BJ (cell line): ENCODE measurements at regions of chr2 and their contacts with region 1.

Region 1: GRCh38 chr2:120858361-120859106 is 122.9 kb downstream of the GLI2 start:
- DNase-seq: no peak
- H3K4me3 ChIP-seq: no peak overlapping the region
- H3K27me3 ChIP-seq: no peaks in the 10 kb centered on the region
- CTCF ChIP-seq: no peak

Region 2: DNA sequence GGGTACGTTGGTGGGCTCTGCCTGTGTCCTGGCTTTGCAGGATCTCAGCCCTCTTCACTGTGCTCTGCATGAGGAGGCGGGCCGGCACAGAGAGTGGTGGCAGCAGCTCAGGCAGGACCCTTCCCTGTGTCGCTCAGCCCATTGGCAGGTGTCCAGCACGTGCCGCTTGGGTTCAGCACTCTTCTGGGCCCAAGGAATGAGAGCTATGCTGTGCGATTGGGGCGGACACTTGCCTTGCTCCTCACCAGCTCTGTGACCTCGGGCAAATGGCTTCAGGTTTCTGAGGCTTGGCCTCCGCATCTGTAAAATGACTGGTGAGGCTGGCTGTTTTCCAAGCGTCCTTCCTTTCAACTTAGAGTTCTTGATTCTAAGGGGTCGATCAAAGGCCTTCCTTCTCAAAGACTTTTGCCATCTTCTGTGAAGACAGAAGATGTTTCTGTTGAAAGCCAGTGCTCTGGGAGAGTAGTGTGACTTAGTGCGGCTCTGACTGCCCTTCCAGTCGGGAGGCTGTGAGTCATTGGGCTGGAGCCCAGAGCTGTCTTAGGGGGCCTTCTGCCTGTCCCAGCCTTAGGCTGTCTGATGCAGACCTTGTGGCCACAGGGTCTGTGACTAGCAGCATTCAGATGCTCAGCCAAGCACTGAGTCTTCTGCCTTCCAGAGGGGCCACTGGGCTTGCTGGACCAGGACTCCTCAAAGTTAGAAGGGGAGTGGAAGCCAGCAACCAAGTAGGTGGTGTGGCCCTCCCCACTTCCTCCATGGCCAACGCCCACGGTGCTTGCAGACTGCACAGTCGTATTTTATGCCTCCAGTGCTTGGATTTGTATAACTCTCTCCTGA is 87.2 kb before region 1 on chr2:
- CTCF ChIA-PET with region 1: no interaction called
- POLR2A ChIA-PET with region 1: no interaction called
- DNase-seq: peak; percentile 75
- H3K4me3 ChIP-seq: no peak overlapping the region
- H3K27me3 ChIP-seq: no peaks in the 10 kb centered on the region
- CTCF ChIP-seq: no peak

Region 3: DNA sequence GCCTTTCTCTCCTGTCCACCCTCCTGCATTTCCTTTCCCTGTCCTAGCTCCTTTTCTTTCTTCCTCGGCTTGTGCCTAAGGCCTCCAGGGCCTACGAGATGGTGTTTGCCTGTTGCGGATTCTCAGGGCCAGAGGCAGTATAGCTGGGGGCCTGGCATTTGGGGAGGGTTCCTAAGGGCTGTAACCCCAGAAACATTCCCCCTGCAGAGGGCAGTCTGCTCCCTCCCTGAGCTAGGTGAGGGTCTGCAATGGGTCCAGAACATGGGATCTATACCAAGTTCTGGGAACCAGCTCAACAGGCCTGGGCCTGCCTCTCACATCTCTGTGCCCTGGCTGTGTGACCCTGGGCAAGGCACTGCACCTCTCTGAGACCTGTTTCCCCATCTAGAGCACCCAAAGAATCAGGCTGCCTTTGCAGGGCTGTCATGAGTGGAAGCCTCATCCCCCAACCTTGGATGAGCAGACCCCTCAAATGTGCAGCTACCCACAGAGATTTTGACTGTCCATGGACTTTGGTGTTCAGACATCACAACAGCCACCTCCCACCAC is 25.3 kb before region 1 on chr2:
- CTCF ChIA-PET with region 1: no interaction called
- POLR2A ChIA-PET with region 1: interaction called, 18 read pairs
- DNase-seq: no peak
- H3K4me3 ChIP-seq: no peak overlapping the region
- H3K27me3 ChIP-seq: no peaks in the 10 kb centered on the region
- CTCF ChIP-seq: no peak

Region 4: DNA sequence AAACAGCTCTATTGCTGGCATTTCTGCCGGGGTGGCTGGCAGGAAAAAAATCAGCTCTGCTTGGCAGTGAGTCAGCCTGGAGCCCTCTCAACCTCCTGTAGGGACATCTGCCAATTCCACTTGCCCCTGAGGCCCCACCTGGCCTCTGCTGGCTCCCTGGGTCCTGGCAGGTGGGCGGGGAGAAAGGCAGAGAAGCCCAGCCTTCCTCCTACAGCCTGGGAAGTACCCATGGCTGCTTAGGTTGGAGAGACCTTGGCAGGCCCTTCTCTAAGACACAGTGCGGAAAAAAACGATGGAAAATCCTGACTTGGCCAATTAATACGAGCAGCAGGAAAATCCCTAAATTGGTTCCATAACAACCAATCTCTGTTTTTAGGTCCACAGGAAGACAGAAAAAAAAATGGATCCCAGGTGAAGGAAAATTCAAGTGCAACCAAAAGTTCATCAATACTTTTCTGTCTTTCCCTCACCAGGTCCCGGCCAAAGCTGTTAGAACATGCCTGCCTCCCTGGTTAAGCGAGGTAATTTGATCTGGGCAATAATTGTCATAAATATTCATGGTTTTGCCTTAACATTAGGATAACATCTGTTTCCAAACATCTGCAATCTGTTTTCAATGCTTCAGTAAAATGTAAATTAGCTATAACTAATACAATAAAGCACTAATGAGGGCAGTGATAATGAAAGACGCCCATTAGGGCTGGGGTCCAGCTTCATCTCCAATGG is 180.5 kb after region 1 on chr2:
- CTCF ChIA-PET with region 1: no interaction called
- POLR2A ChIA-PET with region 1: no interaction called
- DNase-seq: no peak
- H3K4me3 ChIP-seq: no peak overlapping the region
- H3K27me3 ChIP-seq: peaks cover 25% of the 10 kb centered on the region
- CTCF ChIP-seq: no peak